ENCODE measurements at regions of chr1 and their contacts with region 1.

Region 1: DNA sequence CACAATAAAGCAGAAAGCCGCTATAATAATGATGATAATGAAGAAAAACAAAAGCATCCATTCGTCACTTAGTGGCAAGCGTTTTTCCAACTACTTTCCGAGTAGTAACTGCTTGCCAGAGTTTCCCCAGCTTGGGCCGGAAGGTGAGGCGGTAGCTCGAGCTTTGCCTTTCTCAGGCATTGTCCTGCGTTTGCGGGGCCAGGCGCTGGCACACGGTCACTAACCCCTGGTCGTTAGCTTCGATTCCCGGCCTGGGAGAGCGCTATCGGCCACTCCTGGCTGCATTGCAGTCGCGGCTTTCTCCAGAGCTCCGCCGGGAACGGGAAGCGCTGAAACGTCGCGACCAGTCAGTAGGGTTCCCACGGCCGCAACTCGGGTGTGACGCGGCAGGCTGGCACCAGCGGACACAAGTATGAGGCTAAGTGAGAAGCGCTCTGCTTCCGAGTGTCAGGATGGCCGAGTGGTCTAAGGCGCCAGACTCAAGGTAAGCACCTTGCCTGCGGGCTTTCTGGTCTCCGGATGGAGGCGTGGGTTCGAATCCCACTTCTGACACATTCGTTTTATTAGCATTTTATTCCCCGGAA is 14.6 kb upstream of the ZNF692 start:
- DNase-seq: peak; percentile 79 to 98
- ATAC-seq: peak; percentile 89 to 93
- H3K4me3 ChIP-seq: peak overlapping the region; percentile 54
- H3K27ac ChIP-seq: peak overlapping the region; percentile 80 to 85
- H3K4me1 ChIP-seq: peaks cover 6% of the 10 kb centered on the region; the same call in 2 of the 3 replicates
- CTCF ChIP-seq: no peak; the same call in 2 of the 3 replicates
- EP300 ChIP-seq: no peak
- POLR2A ChIP-seq: peak; percentile 60
- RAD21 ChIP-seq: no peak

Region 2: DNA sequence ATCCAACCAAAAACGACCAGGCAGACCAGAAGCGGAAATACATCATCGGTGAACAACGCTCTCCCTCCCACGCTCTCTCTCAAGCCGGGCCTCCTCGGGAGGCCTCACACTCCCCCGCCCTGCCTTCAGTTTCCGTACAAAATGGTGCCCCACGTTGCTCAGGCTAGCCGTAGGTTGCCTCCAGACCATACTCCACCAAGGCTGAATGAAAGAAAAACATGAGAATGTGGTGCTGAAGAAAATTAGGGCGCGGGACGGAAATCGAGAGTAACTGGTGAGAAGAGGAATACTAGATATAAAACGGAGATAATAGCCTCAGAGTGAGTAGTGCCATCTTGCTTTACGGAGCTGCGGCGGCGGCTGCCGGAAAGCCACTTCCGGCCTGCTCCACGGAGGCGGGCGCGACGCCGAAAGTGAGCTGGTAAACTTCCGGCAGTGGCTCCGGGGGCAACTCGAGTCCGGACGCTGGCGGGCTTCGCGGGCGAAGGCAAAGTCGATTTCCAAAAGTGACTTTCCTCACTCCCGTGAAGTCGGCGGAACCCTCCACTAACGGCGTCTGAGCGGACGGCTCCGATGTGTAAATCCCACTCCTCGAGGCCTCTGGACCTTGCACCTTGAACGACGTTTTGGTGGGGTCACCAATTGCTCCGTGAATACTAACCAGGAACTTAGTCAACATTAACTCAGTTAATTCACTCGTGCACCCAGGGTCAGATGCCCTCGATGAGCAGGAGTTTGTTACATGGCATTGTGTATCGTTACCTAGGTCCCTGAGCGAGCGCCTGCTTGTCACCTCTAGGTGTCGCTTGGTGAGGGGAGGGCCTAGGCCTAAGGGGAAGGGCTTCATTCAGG is 47.4 kb before region 1 on chr1 and contains the start of gene SH3BP5L:
- CTCF ChIA-PET with region 1: interaction called, 6 read pairs
- POLR2A ChIA-PET with region 1: interaction called, 26 read pairs
- DNase-seq: peak; percentile 97 to 98
- ATAC-seq: peak; percentile 91 to 96
- H3K4me3 ChIP-seq: peak within 1 kb of the TSS; percentile 84
- H3K27ac ChIP-seq: peak within 1 kb of the TSS; percentile 96 to 97
- H3K4me1 ChIP-seq: peaks cover 59% of the 10 kb centered on the region
- CTCF ChIP-seq: peak; percentile 76
- EP300 ChIP-seq: no peak
- POLR2A ChIP-seq: peak; percentile 46
- RAD21 ChIP-seq: peak; percentile 44 to 48; a peak in 4 of 5 replicates
- polyA plus RNA-seq, gene SH3BP5L: 10.9 and 12.1 TPM in 2 replicates

Region 3: DNA sequence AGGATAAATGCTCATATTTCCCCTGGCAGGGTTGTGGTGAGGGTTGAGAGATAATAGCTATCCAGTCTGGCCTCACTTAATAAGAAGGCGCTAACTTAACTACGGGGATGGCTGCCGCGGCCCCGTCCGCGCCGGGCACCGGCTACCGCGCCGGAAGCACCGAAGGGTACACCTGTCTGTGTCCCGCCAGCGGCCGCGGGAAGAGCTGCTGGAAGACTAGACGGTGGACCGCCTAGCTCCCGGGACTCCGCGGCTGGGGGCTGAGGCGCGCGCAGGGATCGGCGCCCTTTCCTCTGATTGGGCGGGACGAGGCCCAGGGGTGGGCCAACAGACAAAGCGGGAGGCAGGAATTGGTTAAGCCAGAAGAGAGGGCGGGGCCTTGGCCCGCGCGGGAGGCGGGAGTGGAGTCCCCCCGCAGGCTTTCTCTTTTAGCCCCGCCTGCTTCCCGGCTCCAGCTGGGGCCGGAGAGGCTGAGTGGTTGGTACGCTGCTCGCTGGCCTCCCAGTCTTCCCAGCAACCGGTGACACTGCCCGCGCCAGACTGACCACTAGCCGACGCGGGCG is 35.6 kb before region 1 on chr1 and contains the start of gene ZNF672:
- CTCF ChIA-PET with region 1: interaction called, 6 read pairs
- POLR2A ChIA-PET with region 1: interaction called, 24 read pairs
- DNase-seq: peak; percentile 90 to 97
- ATAC-seq: peak; percentile 90 to 95
- H3K4me3 ChIP-seq: peak within 1 kb of the TSS; percentile 88
- H3K27ac ChIP-seq: peak within 1 kb of the TSS; percentile 94 to 95
- H3K4me1 ChIP-seq: peaks cover 10% of the 10 kb centered on the region; the same call in 2 of the 3 replicates
- CTCF ChIP-seq: no peak
- EP300 ChIP-seq: no peak
- POLR2A ChIP-seq: peak; percentile 87
- RAD21 ChIP-seq: no peak
- polyA plus RNA-seq, gene ZNF672: 20.4 and 20.6 TPM in 2 replicates

Region 4: DNA sequence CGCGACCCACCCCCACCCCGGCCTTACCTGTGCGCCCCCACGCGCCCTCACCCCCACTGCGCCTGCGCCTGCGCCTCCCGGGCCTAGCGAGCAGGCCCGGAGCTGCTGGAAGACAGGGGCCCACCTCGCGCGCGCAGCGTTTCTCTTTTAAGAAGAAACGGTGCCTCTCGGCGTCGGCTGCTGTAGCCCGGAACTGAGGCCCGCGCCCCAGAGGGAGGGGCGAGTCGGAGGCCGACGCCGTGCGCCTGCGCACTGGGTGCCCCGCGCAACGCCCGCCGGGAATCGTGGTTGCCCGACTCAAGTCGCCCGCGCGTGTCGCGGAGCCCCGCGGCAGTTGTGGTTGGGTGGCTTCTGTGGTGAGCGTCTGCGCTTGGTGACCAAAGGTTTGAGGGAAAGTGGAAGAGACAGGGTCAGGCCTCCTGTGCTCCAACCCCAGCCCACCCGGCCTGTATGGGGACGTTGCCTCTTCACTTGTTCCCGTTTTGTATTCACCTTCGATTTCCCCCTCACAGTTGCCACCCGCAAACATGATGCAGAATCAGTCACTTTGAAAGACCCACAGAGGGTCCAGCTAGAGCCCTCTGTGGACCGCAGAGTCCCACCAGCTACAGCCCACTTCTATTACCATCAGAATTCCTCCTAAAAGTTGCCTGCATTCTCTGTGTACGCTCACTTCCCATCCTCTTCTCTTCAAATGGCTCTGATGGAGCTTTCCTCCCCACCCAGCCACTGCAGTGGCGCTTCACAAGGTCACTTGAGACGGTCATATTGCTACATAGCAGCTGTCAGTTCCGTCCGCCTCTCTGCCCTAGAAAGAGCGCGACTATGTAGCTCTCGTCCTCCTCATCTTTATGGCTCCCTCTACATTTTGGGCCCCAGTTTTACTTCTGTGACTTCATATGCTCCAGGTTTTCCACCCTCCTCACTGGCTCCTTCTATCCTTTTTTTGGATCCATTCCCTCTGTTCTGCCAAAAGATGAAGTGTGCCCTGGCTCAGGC is 14.3 kb before region 1 on chr1 and contains the start of gene ZNF692:
- CTCF ChIA-PET with region 1: interaction called, 27 read pairs
- POLR2A ChIA-PET with region 1: interaction called, 36 read pairs
- DNase-seq: peak; percentile 94 to 99
- ATAC-seq: peak; percentile 81 to 90
- H3K4me3 ChIP-seq: peak within 1 kb of the TSS; percentile 77
- H3K27ac ChIP-seq: peak within 1 kb of the TSS; percentile 96 to 99
- H3K4me1 ChIP-seq: peaks cover 23% of the 10 kb centered on the region
- CTCF ChIP-seq: no peak; the same call in 2 of the 3 replicates
- EP300 ChIP-seq: no peak
- POLR2A ChIP-seq: peak; percentile 91
- RAD21 ChIP-seq: no peak
- polyA plus RNA-seq, gene ZNF692: 19.8 and 28.2 TPM in 2 replicates

Region 5: DNA sequence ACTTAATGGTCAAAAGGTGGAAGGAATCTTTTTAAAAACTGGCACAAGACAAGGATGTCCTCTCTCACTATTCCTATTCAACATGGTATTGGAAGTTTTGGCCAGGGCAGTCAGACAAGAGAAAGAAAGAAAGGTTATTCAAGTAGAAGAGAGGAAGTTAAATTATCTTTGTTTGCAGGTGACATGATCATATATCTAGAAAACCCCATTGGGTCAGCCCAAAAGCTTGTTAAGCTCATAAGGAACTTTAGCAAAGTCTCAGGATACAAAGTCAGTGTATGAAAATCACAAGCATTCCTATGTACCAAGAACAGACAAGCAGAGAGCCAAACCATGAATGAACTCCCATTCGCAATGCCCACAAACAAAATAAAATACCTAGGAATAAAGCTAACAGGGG is 27.1 kb after region 1 on chr1:
- CTCF ChIA-PET with region 1: interaction called, 3 read pairs
- POLR2A ChIA-PET with region 1: interaction called, 18 read pairs
- DNase-seq: no peak
- ATAC-seq: no peak
- H3K4me3 ChIP-seq: no peak overlapping the region
- H3K27ac ChIP-seq: no peak overlapping the region
- H3K4me1 ChIP-seq: peaks cover 4% of the 10 kb centered on the region; the same call in 1 of the 3 replicates
- CTCF ChIP-seq: no peak
- EP300 ChIP-seq: no peak
- POLR2A ChIP-seq: no peak
- RAD21 ChIP-seq: no peak

Region 6: GRCh38 chr1:248906009-248906752 is 32.7 kb after region 1 on chr1 and contains the start of gene PGBD2:
- CTCF ChIA-PET with region 1: interaction called, 3 read pairs
- POLR2A ChIA-PET with region 1: interaction called, 18 read pairs
- DNase-seq: peak; percentile 79 to 96
- ATAC-seq: peak; percentile 95 to 97
- H3K4me3 ChIP-seq: peak within 1 kb of the TSS; percentile 62
- H3K27ac ChIP-seq: peak within 1 kb of the TSS; percentile 81 to 92
- H3K4me1 ChIP-seq: peaks cover 4% of the 10 kb centered on the region; the same call in 1 of the 3 replicates
- CTCF ChIP-seq: peak; percentile 83
- EP300 ChIP-seq: no peak
- POLR2A ChIP-seq: peak; percentile 98
- RAD21 ChIP-seq: peak; percentile 31 to 59
- polyA plus RNA-seq, gene PGBD2: 7.1 and 7.6 TPM in 2 replicates